ENCODE measurements at regions of chrX and their contacts with region 1.

Region 1: GRCh38 chrX:69133921-69134542 is 31.2 kb downstream of the PJA1 start:
- DNase-seq: peak; percentile 63
- ATAC-seq: peak; percentile 80
- H3K4me3 Mint-ChIP-seq: no peak overlapping the region; the same call in 1 of the 2 replicates
- H3K27ac Mint-ChIP-seq: peak overlapping the region; percentile 67; the same call in 1 of the 2 replicates
- H3K4me1 Mint-ChIP-seq: peaks cover 68% of the 10 kb centered on the region
- H3K27me3 Mint-ChIP-seq: peaks cover 25% of the 10 kb centered on the region
- CTCF ChIP-seq: no peak

Region 2: DNA sequence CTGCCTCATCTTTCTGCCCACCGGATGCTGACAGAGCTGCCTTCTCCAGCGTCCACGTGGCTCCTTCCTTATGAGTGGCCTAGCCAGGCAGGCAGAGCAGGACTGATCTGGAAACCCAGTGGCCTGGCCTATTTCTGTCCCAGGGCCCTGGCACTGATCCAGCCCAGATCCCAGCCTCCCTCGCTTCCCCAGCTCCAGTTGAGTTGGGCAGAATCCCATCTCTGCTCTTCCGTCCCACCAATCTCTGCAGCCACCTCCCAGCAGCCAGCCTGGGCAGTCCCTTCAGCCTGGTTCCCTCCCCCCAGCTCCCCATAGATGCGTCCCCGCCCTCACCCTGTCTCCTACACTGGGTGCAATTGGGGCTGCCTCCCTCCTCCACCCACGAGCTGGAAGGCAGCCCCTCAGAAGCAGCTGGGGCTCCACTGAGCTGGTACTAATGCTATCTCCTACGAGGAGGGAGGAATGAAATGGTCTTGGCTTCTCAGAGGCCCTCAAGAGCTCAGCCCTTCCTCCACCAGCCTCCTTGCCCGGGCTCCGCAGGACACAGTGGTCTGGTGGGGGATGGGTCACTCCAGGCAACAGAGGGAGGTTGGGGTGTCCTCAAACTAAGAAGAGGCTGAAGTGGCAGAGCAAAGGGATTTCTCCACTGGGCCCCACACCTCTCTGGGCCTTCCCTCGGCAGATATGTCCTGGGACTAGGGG is 62.9 kb before region 1 on chrX:
- CTCF ChIA-PET with region 1: no interaction called
- POLR2A ChIA-PET with region 1: no interaction called
- DNase-seq: no peak
- ATAC-seq: peak; percentile 22; the same call in 1 of the 2 replicates
- H3K4me3 Mint-ChIP-seq: no peak overlapping the region
- H3K27ac Mint-ChIP-seq: no peak overlapping the region
- H3K4me1 Mint-ChIP-seq: peaks cover 9% of the 10 kb centered on the region
- H3K27me3 Mint-ChIP-seq: peaks cover 3% of the 10 kb centered on the region
- CTCF ChIP-seq: no peak

Region 3: GRCh38 chrX:69119122-69119521 is 14.9 kb before region 1 on chrX:
- CTCF ChIA-PET with region 1: interaction called, 11 read pairs
- POLR2A ChIA-PET with region 1: no interaction called
- DNase-seq: peak; percentile 23
- ATAC-seq: peak; percentile 82
- H3K4me3 Mint-ChIP-seq: no peak overlapping the region
- H3K27ac Mint-ChIP-seq: no peak overlapping the region
- H3K4me1 Mint-ChIP-seq: peaks cover 6% of the 10 kb centered on the region; the same call in 1 of the 2 replicates
- H3K27me3 Mint-ChIP-seq: peaks cover 3% of the 10 kb centered on the region; the same call in 1 of the 2 replicates
- CTCF ChIP-seq: no peak